Activated T-helper 1 cell treated with anti-CD3 and anti-CD28 coated beads, Interleukin-12 subunit alpha, Interleukin-12 subunit beta, Interleukin-2, Interleukin-4 antibody, amounts not matched to agents 30 ng/mL and 10 ng/mL and 1 ng/mL, durations not matched to agents 14 hours and 24 hours and 36 hours (primary cell): ENCODE measurements at regions of chr5 and their contacts with region 1.

Region 1: DNA sequence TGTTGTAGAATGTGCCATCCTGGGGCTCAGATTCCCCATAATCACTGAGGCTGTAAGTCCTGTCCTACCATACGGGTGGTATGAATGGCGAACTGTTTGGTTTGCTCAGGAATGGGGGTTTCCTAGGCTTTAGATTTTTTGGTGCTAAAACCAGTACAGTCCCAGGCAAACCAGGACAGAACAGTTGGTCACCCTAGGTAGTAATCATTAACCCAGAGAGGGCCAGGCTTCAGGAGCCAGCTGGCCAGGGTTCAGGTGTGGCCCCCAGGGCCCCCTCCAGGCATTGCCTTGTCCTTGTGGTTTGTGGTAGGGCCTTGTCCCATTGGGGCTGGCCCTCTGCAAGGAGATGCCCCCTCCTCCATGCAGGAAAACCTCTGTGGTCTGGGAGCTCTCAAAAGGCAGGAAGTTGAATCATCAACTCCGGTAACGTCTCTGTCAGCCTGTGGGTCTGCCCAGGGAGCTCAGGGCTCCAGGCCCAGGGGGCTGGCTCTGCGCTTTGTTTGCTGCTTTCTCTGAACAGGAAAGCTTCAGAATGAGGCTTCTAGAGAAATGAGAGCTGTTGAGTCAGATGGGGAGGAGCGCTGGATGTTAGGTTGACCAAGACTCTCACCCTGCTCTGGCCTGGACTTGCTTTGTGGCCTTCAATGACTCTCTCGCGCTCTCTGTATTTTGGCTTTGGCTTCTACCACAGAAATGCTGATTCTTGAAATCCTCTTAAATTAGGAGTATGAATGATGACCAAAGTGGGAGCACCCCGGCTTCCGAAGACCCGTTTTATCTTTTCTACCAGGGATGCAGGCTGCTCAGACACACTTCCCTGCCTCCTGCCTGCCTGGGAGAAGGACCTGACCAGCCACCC is 22.2 kb upstream of the JADE2 start:
- DNase-seq: peak; percentile 71
- H3K4me3 Mint-ChIP-seq: peak overlapping the region; percentile 60
- H3K27ac Mint-ChIP-seq: peak overlapping the region; percentile 96
- H3K4me1 Mint-ChIP-seq: peaks cover 46% of the 10 kb centered on the region
- H3K27me3 Mint-ChIP-seq: no peaks in the 10 kb centered on the region

Region 2: DNA sequence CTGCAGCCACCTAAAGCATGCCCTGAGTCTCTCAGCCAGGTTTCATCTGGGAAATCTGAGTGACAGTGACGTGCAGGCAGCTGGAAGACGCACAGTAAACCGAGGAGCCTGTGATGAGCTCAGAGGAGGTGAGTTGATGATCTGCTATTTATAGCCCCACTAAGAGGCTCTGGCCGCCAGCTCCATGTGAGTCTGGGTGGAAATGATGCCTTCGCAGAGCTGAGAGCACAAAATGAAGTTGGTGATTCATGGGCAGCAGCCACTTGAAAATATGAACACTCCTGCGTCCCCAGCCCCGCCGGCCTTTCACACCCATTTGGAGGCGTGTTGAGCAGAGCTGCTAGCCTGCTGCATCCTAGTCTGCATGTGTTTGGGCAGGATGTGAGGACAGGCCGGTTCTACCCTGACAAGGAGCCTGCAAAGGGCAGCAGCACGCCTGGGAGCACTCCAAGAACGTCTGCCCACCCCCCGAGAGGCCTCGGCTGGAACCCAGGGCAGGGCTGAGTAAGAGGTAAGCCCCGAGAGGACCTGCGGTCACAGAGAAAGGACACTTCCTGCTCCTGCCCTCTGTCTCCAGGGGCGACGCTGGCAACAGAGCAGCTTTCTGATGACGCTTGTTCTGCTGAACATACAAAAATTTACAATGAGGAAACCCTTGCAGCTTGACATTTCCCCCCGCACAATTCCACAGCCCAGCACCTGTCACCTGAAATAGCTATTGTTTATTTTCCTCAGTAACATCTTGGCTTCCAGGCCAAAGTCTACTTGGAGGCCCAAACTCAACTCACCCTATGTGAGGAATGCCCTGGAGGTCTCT is 66.6 kb before region 1 on chr5:
- intact Hi-C with region 1: loop called (anchors 5 kb)
- DNase-seq: peak; percentile 51
- H3K4me3 Mint-ChIP-seq: peak overlapping the region; percentile 10
- H3K27ac Mint-ChIP-seq: peak overlapping the region; percentile 77
- H3K4me1 Mint-ChIP-seq: peaks cover 26% of the 10 kb centered on the region
- H3K27me3 Mint-ChIP-seq: peaks cover 2% of the 10 kb centered on the region

Region 3: GRCh38 chr5:134465816-134466240 is 37.5 kb before region 1 on chr5:
- intact Hi-C with region 1: loop called (anchors 2 kb)
- DNase-seq: peak; percentile 53
- H3K4me3 Mint-ChIP-seq: peak overlapping the region; percentile 76
- H3K27ac Mint-ChIP-seq: peak overlapping the region; percentile 68
- H3K4me1 Mint-ChIP-seq: peaks cover 17% of the 10 kb centered on the region
- H3K27me3 Mint-ChIP-seq: peaks cover 3% of the 10 kb centered on the region